WTC11 (cell line): ENCODE measurements at regions of chr4 and their contacts with region 1.

Region 1: DNA sequence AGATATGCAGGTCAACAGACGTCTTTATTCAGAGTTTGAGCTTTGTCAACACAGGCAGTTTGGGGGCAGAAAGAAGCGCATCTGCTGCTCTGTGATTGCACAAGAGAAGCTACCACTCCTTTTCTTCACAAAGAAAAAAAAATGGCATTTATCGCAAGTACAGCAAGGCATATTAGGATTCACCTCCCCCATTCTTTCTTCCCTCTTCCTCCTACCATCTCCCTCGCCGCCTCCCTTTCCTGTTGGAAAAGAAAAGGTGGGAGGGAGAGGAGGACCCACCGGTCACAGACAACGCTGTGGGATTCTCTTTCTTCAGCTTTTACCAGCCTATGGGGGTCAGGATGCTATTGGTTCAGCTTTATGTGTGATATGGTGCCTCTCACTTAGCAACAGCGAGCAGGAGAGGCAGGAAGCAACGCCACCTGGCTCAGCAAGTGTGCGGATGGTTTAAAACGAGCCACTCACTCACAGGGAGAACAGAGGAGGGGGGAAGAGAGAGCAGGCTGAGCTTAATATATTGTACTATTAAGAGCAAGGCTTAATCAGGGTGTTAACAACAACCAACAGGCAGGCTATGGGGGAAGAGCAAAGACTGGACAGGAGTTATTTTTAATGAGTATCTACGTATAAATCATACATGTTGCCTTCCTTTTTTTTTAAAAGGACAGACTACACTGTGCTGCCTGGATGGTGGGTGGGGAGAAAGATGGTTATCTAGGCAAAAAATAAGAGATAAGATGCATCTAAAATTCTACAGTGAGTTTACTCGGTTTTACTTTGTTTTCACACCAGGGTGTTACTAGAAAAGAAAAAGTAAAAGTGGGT is 104.7 kb downstream of the MAML3 start:
- DNase-seq: peak; percentile 55
- ATAC-seq: peak; percentile 84
- H3K4me3 Mint-ChIP-seq: peak overlapping the region; percentile 58
- H3K27ac Mint-ChIP-seq: peak overlapping the region; percentile 98
- H3K4me1 Mint-ChIP-seq: peaks cover 63% of the 10 kb centered on the region
- H3K27me3 Mint-ChIP-seq: no peaks in the 10 kb centered on the region
- CTCF ChIP-seq: no peak

Region 2: GRCh38 chr4:139734875-139735380 is 314.3 kb before region 1 on chr4:
- CTCF ChIA-PET with region 1: interaction called, 10 read pairs
- POLR2A ChIA-PET with region 1: interaction called, 3 read pairs
- DNase-seq: peak; percentile 89
- ATAC-seq: peak; percentile 80
- H3K4me3 Mint-ChIP-seq: peak overlapping the region; percentile 72
- H3K27ac Mint-ChIP-seq: no peak overlapping the region
- H3K4me1 Mint-ChIP-seq: peaks cover 31% of the 10 kb centered on the region
- H3K27me3 Mint-ChIP-seq: peaks cover 39% of the 10 kb centered on the region
- CTCF ChIP-seq: peak; percentile 50

Region 3: GRCh38 chr4:140012688-140013486 is 36.3 kb before region 1 on chr4:
- CTCF ChIA-PET with region 1: interaction called, 46 read pairs
- POLR2A ChIA-PET with region 1: no interaction called
- DNase-seq: peak; percentile 60
- ATAC-seq: peak; percentile 99
- H3K4me3 Mint-ChIP-seq: no peak overlapping the region
- H3K27ac Mint-ChIP-seq: peak overlapping the region; percentile 28
- H3K4me1 Mint-ChIP-seq: peaks cover 13% of the 10 kb centered on the region
- H3K27me3 Mint-ChIP-seq: no peaks in the 10 kb centered on the region
- CTCF ChIP-seq: no peak; the same call in 1 of the 2 replicates

Region 4: GRCh38 chr4:140078366-140078765 is 29.1 kb after region 1 on chr4:
- CTCF ChIA-PET with region 1: interaction called, 12 read pairs
- POLR2A ChIA-PET with region 1: interaction called, 4 read pairs
- DNase-seq: peak; percentile 57
- ATAC-seq: peak; percentile 92
- H3K4me3 Mint-ChIP-seq: 0 out of 2 replicates have a peak overlapping the region, but pooled peaks have one; percentile 5
- H3K27ac Mint-ChIP-seq: peak overlapping the region; percentile 90
- H3K4me1 Mint-ChIP-seq: peaks cover 55% of the 10 kb centered on the region
- H3K27me3 Mint-ChIP-seq: no peaks in the 10 kb centered on the region
- CTCF ChIP-seq: no peak